Dorsolateral prefrontal cortex (tissue), 120 donors: ENCODE measurements at regions of chr5 and their contacts with region 1.

Region 1: GRCh38 chr5:172714491-172715421 is 56.2 kb downstream of the DUSP1 start:
- DNase-seq: peak; percentile 57 to 82 (median 75)
- H3K4me3 ChIP-seq: peak overlapping the region in 1 of 59 donors; percentile 10
- H3K27ac ChIP-seq: peak overlapping the region in 55 of 59 donors; percentile 3 to 88 (median 70)
- H3K27me3 ChIP-seq: no peaks in the 10 kb centered on the region
- CTCF ChIP-seq: peak; percentile 60 to 95 (median 84)

Region 2: GRCh38 chr5:172697123-172698121 is 17.3 kb before region 1 on chr5:
- intact Hi-C with region 1: no loop called
- DNase-seq: peak; percentile 76 to 88 (median 85)
- H3K4me3 ChIP-seq: peak overlapping the region; percentile 24 to 78 (median 61)
- H3K27ac ChIP-seq: peak overlapping the region in 42 of 59 donors; percentile 5 to 82 (median 62)
- H3K27me3 ChIP-seq: no peaks in the 10 kb centered on the region
- CTCF ChIP-seq: peak; percentile 82 to 99 (median 95)

Region 3: GRCh38 chr5:172770675-172771438 is 56.1 kb after region 1 on chr5 and contains the start of gene DUSP1:
- intact Hi-C with region 1: loop called (anchors 1 to 2 kb)
- DNase-seq: peak; percentile 95 to 100 (median 99)
- H3K4me3 ChIP-seq: peak within 1 kb of the TSS; percentile 63 to 99 (median 92)
- H3K27ac ChIP-seq: peak within 1 kb of the TSS; percentile 93 to 100 (median 100)
- H3K27me3 ChIP-seq: no peaks in the 10 kb centered on the region
- CTCF ChIP-seq: peak in 52 of 56 donors; percentile 3 to 74 (median 46)
- total RNA-seq, gene DUSP1: 25.5 to 228 (median 63.6) TPM

Region 4: DNA sequence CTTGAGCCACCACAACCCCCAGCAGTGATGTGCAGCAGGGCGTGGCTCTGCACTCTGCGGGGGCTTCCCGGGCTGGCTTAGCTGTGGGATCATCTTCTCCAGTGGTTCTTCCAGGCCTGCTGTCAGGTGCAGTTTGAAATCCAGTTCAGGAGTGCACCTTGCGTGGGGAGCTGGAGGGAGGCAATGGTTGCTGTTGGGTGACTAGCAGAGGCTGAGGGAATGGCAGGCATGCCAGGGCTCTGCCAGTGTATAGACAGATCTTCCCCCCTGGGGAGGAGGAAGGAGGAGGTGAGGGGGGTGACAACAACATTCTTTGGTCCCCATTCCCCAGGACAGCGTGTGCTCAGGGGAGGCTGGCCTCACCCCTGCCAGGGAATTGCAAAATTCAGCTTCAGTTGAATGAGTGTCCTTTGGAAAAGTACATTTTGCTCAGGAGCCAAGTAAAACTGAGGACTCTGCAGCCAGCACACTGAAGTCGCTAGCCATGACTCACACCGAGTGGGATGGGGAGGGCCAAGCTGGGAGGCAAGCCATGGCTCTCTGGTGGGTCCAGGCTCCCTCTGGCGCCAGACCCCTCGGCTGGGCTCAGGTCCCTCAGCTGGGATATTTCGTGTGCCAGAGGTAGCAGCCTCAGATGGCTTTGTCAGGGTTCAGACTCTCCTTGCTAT is 154.3 kb after region 1 on chr5:
- intact Hi-C with region 1: loop called in 1 of 2 experiments (anchors 10 kb)
- DNase-seq: peak in 9 of 10 donors; percentile 48 to 91 (median 78)
- H3K4me3 ChIP-seq: peak overlapping the region in 29 of 59 donors; percentile 2 to 51 (median 25)
- H3K27ac ChIP-seq: peak overlapping the region in 58 of 59 donors; percentile 44 to 96 (median 90)
- H3K27me3 ChIP-seq: no peaks in the 10 kb centered on the region
- CTCF ChIP-seq: peak in 25 of 56 donors; percentile 5 to 53 (median 26)

Region 5: GRCh38 chr5:172932313-172933017 is 217.7 kb after region 1 on chr5:
- intact Hi-C with region 1: loop called (anchors 1 to 2 kb)
- DNase-seq: peak; percentile 61 to 85 (median 76)
- H3K4me3 ChIP-seq: peak overlapping the region in 3 of 59 donors; percentile 9 to 14 (median 10)
- H3K27ac ChIP-seq: peak overlapping the region in 47 of 59 donors; percentile 10 to 85 (median 57)
- H3K27me3 ChIP-seq: no peaks in the 10 kb centered on the region
- CTCF ChIP-seq: peak; percentile 90 to 99 (median 98)

Region 6: DNA sequence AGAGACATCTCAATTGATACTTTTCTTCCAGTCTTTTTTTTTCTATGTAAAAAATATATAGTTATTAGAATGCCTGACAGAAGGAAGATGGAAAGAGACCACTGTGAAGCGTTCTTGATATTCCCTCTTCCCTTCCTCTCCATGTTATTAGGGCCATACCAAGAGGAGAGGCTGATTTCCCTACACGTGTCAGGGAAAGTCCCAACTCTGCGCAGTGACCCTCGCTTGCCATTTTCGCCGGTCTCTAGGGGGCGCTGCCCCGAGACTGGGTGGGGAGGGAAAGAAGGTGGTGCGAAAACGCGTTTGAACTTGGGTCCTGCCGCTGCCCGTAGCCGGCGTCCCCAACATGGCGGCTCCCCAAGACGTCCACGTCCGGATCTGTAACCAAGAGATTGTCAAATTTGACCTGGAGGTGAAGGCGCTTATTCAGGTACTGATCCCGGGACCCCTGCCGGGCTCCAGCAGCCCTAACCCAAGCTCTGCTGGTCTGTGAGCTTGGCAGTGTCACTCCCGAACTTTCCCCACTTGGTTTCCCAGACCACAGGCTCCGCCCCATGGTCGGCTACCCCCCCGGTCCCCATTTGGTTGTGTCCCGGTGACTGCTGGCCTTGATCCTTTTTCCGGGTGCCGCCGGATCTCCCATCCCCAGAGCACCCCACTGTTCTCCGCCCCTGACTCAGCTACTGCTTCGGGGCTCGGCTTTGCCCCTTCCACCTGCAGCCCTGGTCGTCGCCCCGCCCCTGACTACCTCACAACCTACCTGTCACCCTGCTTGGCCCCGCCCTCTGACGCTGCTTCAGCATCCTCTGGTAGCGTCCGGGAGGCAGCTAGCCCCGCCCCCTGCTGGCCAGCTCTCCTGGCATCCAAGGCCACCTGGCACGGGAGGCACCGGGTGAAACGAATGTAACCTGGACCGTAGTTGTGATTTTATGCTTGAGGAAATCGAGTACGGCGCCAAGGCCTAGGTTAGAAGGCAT is 429.7 kb after region 1 on chr5 and contains the start of gene BNIP1:
- intact Hi-C with region 1: loop called (anchors 5 to 10 kb)
- DNase-seq: peak; percentile 86 to 97 (median 90)
- H3K4me3 ChIP-seq: peak within 1 kb of the TSS; percentile 63 to 99 (median 94)
- H3K27ac ChIP-seq: peak within 1 kb of the TSS in 58 of 59 donors; percentile 36 to 96 (median 85)
- H3K27me3 ChIP-seq: no peaks in the 10 kb centered on the region
- CTCF ChIP-seq: peak; percentile 82 to 100 (median 96)
- total RNA-seq, gene BNIP1: 6.2 to 18.9 (median 11.5) TPM